H1 (cell line): ENCODE measurements at regions of chr1 and their contacts with region 1.

Region 1: GRCh38 chr1:154955718-154956543 is at the start of gene PBXIP1:
- DNase-seq: peak in 1 of 2 experiments; percentile 90
- H3K4me3 ChIP-seq: peak within 1 kb of the TSS; percentile 60 to 77 (median 66); a peak in 7 of 8 replicates
- H3K27ac ChIP-seq: peak within 1 kb of the TSS; percentile 95
- H3K4me1 ChIP-seq: peaks cover 4 to 28% (median 9%) of the 10 kb centered on the region in 4 experiments
- H3K27me3 ChIP-seq: no peaks in the 10 kb centered on the region; a peak in 2 of 7 replicates
- CTCF ChIP-seq: peak in 1 of 3 experiments; percentile 10; a peak in 1 of 4 replicates
- EP300 ChIP-seq: no peak
- POLR2A ChIP-seq: no peak; a peak in 1 of 3 replicates
- RAD21 ChIP-seq: no peak; a peak in 1 of 4 replicates
- total RNA-seq, gene PBXIP1: 17.9 and 19.8 TPM in 2 replicates

Region 2: GRCh38 chr1:154860156-154860870 is 95.6 kb before region 1 on chr1:
- CTCF ChIA-PET with region 1: no interaction called
- POLR2A ChIA-PET with region 1: no interaction called
- DNase-seq: no peak
- H3K4me3 ChIP-seq: no peak overlapping the region
- H3K27ac ChIP-seq: no peak overlapping the region
- H3K4me1 ChIP-seq: peaks cover 0 to 9% (median 4%) of the 10 kb centered on the region in 4 experiments; a peak in 5 of 7 replicates
- H3K27me3 ChIP-seq: no peaks in the 10 kb centered on the region; a peak in 1 of 7 replicates
- CTCF ChIP-seq: no peak
- EP300 ChIP-seq: no peak
- POLR2A ChIP-seq: no peak
- RAD21 ChIP-seq: no peak

Region 3: DNA sequence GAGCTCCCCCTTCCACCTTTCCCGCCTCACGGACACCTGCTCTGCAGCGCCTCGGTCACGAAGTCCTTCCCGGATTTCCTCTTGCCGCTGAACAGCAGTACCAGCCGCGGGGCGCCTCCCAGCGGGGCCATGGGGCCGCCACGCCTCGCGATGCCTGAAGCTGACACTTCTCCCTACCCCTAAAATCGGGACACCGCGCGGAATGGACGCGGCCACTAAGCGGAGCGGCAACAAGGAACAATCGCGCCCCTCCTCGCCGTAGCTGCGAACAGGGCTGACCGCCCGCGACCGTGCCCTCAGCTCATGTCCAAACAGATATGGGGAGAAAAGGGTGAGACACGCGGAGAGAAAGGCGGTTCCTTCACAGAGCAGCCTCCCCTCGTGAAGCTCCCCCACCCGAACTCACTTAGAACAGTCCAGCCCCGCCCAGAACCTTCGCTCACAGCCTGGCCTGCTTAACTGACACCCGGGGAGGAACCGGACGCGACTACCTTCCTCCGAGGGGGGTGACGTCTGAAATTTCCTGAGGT is 19.3 kb before region 1 on chr1 and contains the start of gene PMVK:
- CTCF ChIA-PET with region 1: interaction called, 3 read pairs
- POLR2A ChIA-PET with region 1: interaction called, 14 read pairs
- DNase-seq: peak; percentile 80 to 94
- H3K4me3 ChIP-seq: peak within 1 kb of the TSS; percentile 71 to 87 (median 72)
- H3K27ac ChIP-seq: peak within 1 kb of the TSS; percentile 99
- H3K4me1 ChIP-seq: peaks cover 4 to 9% (median 7%) of the 10 kb centered on the region in 4 experiments; a peak in 6 of 7 replicates
- H3K27me3 ChIP-seq: no peaks in the 10 kb centered on the region
- CTCF ChIP-seq: peak in 1 of 3 experiments; percentile 1; a peak in 1 of 4 replicates
- EP300 ChIP-seq: no peak
- POLR2A ChIP-seq: peak in 1 of 2 experiments; percentile 63; a peak in 1 of 3 replicates
- RAD21 ChIP-seq: no peak; a peak in 1 of 4 replicates
- total RNA-seq, gene PMVK: 26.5 and 30.5 TPM in 2 replicates

Region 4: GRCh38 chr1:154974063-154974807 is 18.3 kb after region 1 on chr1 and contains the start of gene CKS1B:
- CTCF ChIA-PET with region 1: interaction called, 18 read pairs
- POLR2A ChIA-PET with region 1: interaction called, 662 read pairs
- DNase-seq: peak; percentile 91 to 98
- H3K4me3 ChIP-seq: peak within 1 kb of the TSS; percentile 87 to 99 (median 96)
- H3K27ac ChIP-seq: peak within 1 kb of the TSS; percentile 95
- H3K4me1 ChIP-seq: peaks cover 3 to 13% (median 11%) of the 10 kb centered on the region in 4 experiments; a peak in 6 of 7 replicates
- H3K27me3 ChIP-seq: no peaks in the 10 kb centered on the region
- CTCF ChIP-seq: no peak
- EP300 ChIP-seq: no peak
- POLR2A ChIP-seq: peak; percentile 46 to 82
- RAD21 ChIP-seq: no peak
- total RNA-seq, gene CKS1B: 284 and 294 TPM in 2 replicates

Region 5: DNA sequence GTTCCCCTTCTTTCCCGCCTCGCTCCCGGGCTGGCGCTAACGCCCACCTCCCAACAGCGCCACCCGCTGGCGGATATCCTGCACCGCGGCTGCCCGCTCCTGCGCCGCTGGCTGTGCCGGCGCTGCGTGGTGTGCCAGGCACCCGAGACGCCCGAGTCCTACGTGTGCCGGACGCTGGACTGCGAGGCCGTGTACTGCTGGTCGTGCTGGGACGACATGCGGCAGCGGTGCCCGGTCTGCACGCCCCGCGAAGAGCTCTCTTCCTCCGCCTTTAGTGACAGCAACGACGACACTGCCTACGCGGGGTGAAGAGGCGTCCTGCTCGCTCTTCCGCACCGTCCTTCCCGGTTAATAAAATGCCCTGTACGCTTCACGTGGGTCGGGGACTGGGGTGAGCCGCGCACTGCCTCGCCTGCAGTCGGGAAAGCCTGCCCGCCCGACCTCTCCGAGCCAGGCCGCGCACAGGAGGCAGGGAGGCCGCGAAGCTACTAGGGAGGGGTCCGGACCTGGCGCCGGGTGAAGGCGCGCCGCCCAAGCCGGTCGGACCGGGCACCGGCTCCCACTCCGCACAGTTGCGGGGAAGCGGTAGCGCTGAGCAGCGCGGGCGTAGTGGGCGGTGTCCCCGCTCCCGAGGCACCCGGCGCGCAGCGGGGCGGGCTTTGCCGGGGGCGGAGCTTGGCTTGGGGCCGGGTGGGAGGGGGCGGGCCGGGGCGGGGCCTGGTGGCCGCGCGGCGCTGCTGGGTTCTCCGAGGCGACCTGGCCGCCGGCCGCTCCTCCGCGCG is 94.8 kb after region 1 on chr1 and contains the start of gene ADAM15:
- CTCF ChIA-PET with region 1: interaction called, 10 read pairs
- POLR2A ChIA-PET with region 1: interaction called, 7 read pairs
- DNase-seq: peak in 1 of 2 experiments; percentile 95
- H3K4me3 ChIP-seq: peak within 1 kb of the TSS; percentile 32 to 76 (median 62)
- H3K27ac ChIP-seq: no peak within 1 kb of the TSS
- H3K4me1 ChIP-seq: peaks cover 4 to 28% (median 10%) of the 10 kb centered on the region in 4 experiments; a peak in 6 of 7 replicates
- H3K27me3 ChIP-seq: peaks cover 0 to 18% (median 12%) of the 10 kb centered on the region in 4 experiments; a peak in 5 of 7 replicates
- CTCF ChIP-seq: peak; percentile 94 to 98 (median 97)
- EP300 ChIP-seq: no peak
- POLR2A ChIP-seq: no peak
- RAD21 ChIP-seq: peak; percentile 51 to 65
- total RNA-seq, gene ADAM15: 32.2 and 32.9 TPM in 2 replicates